ENCODE measurements at regions of chr22 and their contacts with region 1.

Region 1: DNA sequence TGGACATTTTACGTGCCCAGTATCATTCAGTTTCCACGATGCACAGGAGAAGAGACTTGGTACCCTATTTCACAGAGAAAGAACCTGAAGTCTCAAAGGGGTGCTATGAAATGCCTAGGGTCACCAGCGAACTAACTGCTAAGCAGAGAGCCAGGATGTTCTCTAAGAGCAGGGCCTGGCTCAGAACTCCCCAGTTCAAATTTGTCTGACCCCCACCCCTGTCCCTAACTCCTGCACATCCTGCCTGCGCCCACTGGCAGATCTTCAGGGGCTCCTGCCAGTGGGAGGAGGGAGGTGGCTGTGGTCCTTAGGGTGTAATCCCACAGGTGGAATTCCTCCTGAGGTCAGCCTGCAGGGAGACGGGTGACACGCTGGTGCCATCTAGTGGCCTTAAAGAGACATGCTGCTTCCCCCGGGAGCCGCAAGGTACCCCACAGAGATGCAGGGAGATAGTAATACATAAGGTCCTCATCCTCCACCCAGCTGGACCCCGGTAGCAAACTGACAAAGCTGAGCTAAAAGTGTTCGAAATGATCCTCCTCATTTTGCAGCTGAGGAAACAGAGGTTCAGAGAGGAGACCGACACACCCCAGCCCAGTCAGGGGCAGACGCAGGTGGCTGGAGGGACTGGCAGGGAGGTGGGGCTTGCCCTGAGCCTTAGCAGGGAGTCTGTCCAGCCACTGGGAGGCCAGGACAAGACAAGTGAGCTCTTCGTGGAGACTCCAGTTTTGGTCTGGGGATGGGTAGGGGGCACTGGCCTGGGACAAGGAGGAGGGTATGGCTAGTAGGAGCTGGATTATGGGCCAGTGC is 34.1 kb downstream of the MB start:
- DNase-seq: peak; percentile 68
- H3K4me3 ChIP-seq: no peak overlapping the region
- H3K27ac ChIP-seq: peak overlapping the region; percentile 52 to 70 (median 54)
- H3K4me1 ChIP-seq: peaks cover 3 to 29% (median 9%) of the 10 kb centered on the region in 4 donors
- H3K27me3 ChIP-seq: no peaks in the 10 kb centered on the region
- CTCF ChIP-seq: peak; percentile 93 to 96 (median 95)
- EP300 ChIP-seq: no peak
- POLR2A ChIP-seq: no peak

Region 2: GRCh38 chr22:35266280-35266679 is 316.8 kb before region 1 on chr22:
- in situ Hi-C with region 1: no loop called
- intact Hi-C with region 1: no loop called
- DNase-seq: no peak
- H3K4me3 ChIP-seq: no peak overlapping the region
- H3K27ac ChIP-seq: peak overlapping the region in 2 of 4 donors; percentile 5 to 35
- H3K4me1 ChIP-seq: peaks cover 0 to 10% (median 5%) of the 10 kb centered on the region in 4 donors
- H3K27me3 ChIP-seq: no peaks in the 10 kb centered on the region
- CTCF ChIP-seq: no peak
- EP300 ChIP-seq: no peak
- POLR2A ChIP-seq: no peak

Region 3: GRCh38 chr22:35350539-35351503 is 232.2 kb before region 1 on chr22:
- in situ Hi-C with region 1: loop called in 3 of 4 experiments (anchors 5 to 10 kb)
- intact Hi-C with region 1: loop called (anchors 10 kb)
- DNase-seq: peak; percentile 95
- H3K4me3 ChIP-seq: peak overlapping the region; percentile 29 to 58 (median 41)
- H3K27ac ChIP-seq: peak overlapping the region; percentile 62 to 87 (median 79)
- H3K4me1 ChIP-seq: peaks cover 8 to 25% (median 19%) of the 10 kb centered on the region in 4 donors
- H3K27me3 ChIP-seq: no peaks in the 10 kb centered on the region
- CTCF ChIP-seq: peak; percentile 84 to 97 (median 87)
- EP300 ChIP-seq: no peak
- POLR2A ChIP-seq: peak; percentile 32

Region 4: DNA sequence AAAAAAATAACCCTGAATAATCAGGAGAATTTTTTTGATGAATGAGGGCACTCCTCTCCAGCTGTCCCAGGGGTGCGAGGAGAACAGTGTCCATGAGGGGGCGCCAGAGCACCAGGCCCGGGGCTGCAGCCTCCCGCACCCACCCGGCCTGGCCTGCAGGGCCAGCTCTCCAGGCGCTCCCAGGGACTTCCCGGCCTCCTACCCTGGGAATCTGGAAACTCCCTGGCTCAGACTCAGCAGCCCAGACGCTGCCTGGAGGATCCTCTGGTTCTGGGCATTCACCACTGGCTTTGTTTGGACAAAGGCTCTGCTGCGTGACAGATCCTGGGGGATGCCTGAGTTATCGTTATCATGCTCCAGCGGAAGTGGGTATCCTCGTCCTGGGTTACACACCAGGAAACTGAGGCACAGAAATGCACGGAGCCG is 152.2 kb before region 1 on chr22:
- in situ Hi-C with region 1: loop called (anchors 5 to 10 kb)
- intact Hi-C with region 1: loop called (anchors 2 kb)
- DNase-seq: peak; percentile 93
- H3K4me3 ChIP-seq: no peak overlapping the region
- H3K27ac ChIP-seq: peak overlapping the region; percentile 59 to 78 (median 70)
- H3K4me1 ChIP-seq: peaks cover 7 to 17% (median 11%) of the 10 kb centered on the region in 4 donors
- H3K27me3 ChIP-seq: no peaks in the 10 kb centered on the region
- CTCF ChIP-seq: peak; percentile 94 to 100 (median 98)
- EP300 ChIP-seq: peak; percentile 50
- POLR2A ChIP-seq: no peak

Region 5: GRCh38 chr22:35792506-35792905 is 209.4 kb after region 1 on chr22:
- in situ Hi-C with region 1: no loop called
- intact Hi-C with region 1: no loop called
- DNase-seq: no peak
- H3K4me3 ChIP-seq: no peak overlapping the region
- H3K27ac ChIP-seq: no peak overlapping the region
- H3K4me1 ChIP-seq: peaks cover 0 to 4% (median 0%) of the 10 kb centered on the region in 4 donors
- H3K27me3 ChIP-seq: no peaks in the 10 kb centered on the region
- CTCF ChIP-seq: no peak
- EP300 ChIP-seq: no peak
- POLR2A ChIP-seq: no peak

Measured in transverse colon (tissue), 4 donors.